Sigmoid colon (tissue), 7 donors: ENCODE measurements at regions of chr12 and their contacts with region 1.

Region 1: GRCh38 chr12:4037747-4038312 is 164.6 kb upstream of the PARP11 start:
- DNase-seq: no peak
- H3K4me3 ChIP-seq: no peak overlapping the region
- H3K27ac ChIP-seq: no peak overlapping the region
- H3K4me1 ChIP-seq: no peaks in the 10 kb centered on the region
- H3K27me3 ChIP-seq: no peaks in the 10 kb centered on the region
- CTCF ChIP-seq: peak in 3 of 4 experiments; percentile 42 to 69 (median 69)
- EP300 ChIP-seq: no peak
- POLR2A ChIP-seq: no peak

Region 2: GRCh38 chr12:3655328-3655900 is 382.4 kb before region 1 on chr12:
- intact Hi-C with region 1: no loop called
- DNase-seq: no peak
- H3K4me3 ChIP-seq: no peak overlapping the region
- H3K27ac ChIP-seq: no peak overlapping the region
- H3K4me1 ChIP-seq: peaks cover 0 to 7% (median 4%) of the 10 kb centered on the region in 4 donors
- H3K27me3 ChIP-seq: no peaks in the 10 kb centered on the region
- CTCF ChIP-seq: peak in 2 of 4 experiments; percentile 25 to 28
- EP300 ChIP-seq: no peak
- POLR2A ChIP-seq: no peak

Region 3: DNA sequence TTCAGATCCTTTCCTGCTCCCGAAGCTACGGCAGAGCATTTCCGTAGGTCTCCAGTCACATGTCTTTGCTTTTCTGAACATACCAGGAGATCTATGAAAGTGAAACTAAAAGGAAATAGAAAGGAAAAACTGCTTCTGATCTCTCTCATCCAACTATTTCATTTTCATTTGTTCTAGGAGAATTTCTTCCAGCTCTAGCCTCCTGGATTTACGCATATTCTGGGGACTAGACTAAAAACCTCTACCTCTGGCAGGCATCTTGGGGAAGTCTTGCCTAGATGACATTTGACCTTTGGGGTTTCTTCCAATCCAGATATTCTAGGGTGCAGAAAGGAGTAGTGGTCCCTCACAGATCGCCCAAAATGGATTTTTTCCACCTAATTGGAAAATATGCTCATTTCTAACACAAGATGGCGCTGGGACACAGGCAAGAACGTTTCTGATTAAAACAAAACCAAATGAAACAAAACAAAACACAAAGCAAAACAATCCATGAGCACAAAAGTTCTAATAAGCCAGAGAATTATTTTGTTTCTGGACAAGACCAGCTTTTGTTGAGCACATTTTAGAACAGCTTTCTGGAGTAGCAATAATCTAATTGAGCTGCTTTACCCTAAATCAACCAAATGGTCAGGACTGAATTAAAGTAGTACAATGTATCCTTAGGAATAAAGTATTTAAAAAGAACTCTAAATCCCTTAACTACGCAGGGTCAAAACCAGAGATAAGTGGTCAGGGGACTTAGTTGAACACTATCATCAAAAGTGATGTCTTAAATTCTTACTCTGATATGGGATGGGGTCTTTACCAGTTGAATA is 152.3 kb before region 1 on chr12:
- intact Hi-C with region 1: loop called (anchors 2 kb)
- DNase-seq: no peak
- H3K4me3 ChIP-seq: peak overlapping the region; percentile 15 to 39 (median 34)
- H3K27ac ChIP-seq: peak overlapping the region; percentile 67 to 72 (median 68)
- H3K4me1 ChIP-seq: peaks cover 0 to 10% (median 0%) of the 10 kb centered on the region in 4 donors
- H3K27me3 ChIP-seq: no peaks in the 10 kb centered on the region
- CTCF ChIP-seq: peak; percentile 57 to 83 (median 76)
- EP300 ChIP-seq: no peak
- POLR2A ChIP-seq: no peak

Region 4: GRCh38 chr12:3995306-3995705 is 42.5 kb before region 1 on chr12:
- intact Hi-C with region 1: loop called (anchors 2 kb)
- DNase-seq: no peak
- H3K4me3 ChIP-seq: no peak overlapping the region
- H3K27ac ChIP-seq: no peak overlapping the region
- H3K4me1 ChIP-seq: no peaks in the 10 kb centered on the region
- H3K27me3 ChIP-seq: peaks cover 0 to 4% (median 0%) of the 10 kb centered on the region in 3 donors
- CTCF ChIP-seq: no peak
- EP300 ChIP-seq: no peak
- POLR2A ChIP-seq: no peak

Region 5: DNA sequence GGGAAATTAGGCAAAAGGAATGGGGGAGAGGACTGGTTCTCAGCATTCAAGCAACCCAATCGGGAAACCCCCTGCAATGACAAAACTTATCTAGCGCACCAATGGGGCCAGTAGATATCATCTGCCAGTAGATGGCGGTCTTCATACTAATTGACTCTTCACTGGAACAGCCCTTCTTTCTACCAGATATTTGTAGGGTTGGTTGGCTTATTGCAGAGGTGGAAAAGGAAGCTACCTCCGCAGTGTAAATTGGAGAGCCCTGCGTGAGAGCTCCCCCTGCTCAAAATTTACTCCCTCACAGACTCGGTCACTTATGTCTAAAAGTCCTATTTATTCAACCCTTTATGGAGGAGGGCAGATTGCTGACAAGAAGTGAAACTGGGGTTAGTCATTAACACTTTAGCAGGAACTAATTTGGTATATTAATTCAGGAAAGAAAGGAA is 69.6 kb after region 1 on chr12:
- intact Hi-C with region 1: no loop called
- DNase-seq: no peak
- H3K4me3 ChIP-seq: no peak overlapping the region
- H3K27ac ChIP-seq: no peak overlapping the region
- H3K4me1 ChIP-seq: no peaks in the 10 kb centered on the region
- H3K27me3 ChIP-seq: peaks cover 0 to 4% (median 0%) of the 10 kb centered on the region in 3 donors
- CTCF ChIP-seq: peak in 3 of 4 experiments; percentile 36 to 61 (median 59)
- EP300 ChIP-seq: no peak
- POLR2A ChIP-seq: no peak